ENCODE measurements at regions of chr3 and their contacts with region 1.

Region 1: GRCh38 chr3:136196401-136197158 is 445 bp upstream of the MSL2 start:
- DNase-seq: peak; percentile 99
- ATAC-seq: peak; percentile 80
- H3K4me3 ChIP-seq: peak overlapping the region; percentile 52 to 83
- H3K27ac ChIP-seq: peak overlapping the region; percentile 96
- H3K4me1 ChIP-seq: peaks cover 32 to 44% of the 10 kb centered on the region in 2 experiments
- H3K27me3 ChIP-seq: no peaks in the 10 kb centered on the region
- CTCF ChIP-seq: no peak
- POLR2A ChIP-seq: peak; percentile 56
- RAD21 ChIP-seq: no peak

Region 2: GRCh38 chr3:135944831-135945592 is 251.6 kb before region 1 on chr3:
- CTCF ChIA-PET with region 1: no interaction called
- POLR2A ChIA-PET with region 1: no interaction called
- RAD21 ChIA-PET with region 1: no interaction called
- intact Hi-C with region 1: no loop called
- DNase-seq: no peak
- ATAC-seq: no peak
- H3K4me3 ChIP-seq: no peak overlapping the region
- H3K27ac ChIP-seq: no peak overlapping the region
- H3K4me1 ChIP-seq: no peaks in the 10 kb centered on the region; a peak in 1 of 4 replicates
- H3K27me3 ChIP-seq: no peaks in the 10 kb centered on the region
- CTCF ChIP-seq: no peak
- POLR2A ChIP-seq: no peak
- RAD21 ChIP-seq: no peak

Region 3: GRCh38 chr3:135965506-135966270 is 230.9 kb before region 1 on chr3 and contains the start of gene PPP2R3A:
- CTCF ChIA-PET with region 1: no interaction called
- POLR2A ChIA-PET with region 1: no interaction called
- RAD21 ChIA-PET with region 1: interaction called in 1 of 2 experiments, 3 read pairs
- intact Hi-C with region 1: loop called (anchors 5 kb)
- DNase-seq: peak; percentile 64
- ATAC-seq: peak; percentile 87
- H3K4me3 ChIP-seq: peak within 1 kb of the TSS; percentile 61 to 76
- H3K27ac ChIP-seq: peak within 1 kb of the TSS; percentile 70
- H3K4me1 ChIP-seq: peaks cover 10 to 12% of the 10 kb centered on the region in 2 experiments; a peak in 3 of 4 replicates
- H3K27me3 ChIP-seq: no peaks in the 10 kb centered on the region
- CTCF ChIP-seq: no peak
- POLR2A ChIP-seq: no peak
- RAD21 ChIP-seq: no peak
- total RNA-seq, gene PPP2R3A: 6.1 TPM

Region 4: DNA sequence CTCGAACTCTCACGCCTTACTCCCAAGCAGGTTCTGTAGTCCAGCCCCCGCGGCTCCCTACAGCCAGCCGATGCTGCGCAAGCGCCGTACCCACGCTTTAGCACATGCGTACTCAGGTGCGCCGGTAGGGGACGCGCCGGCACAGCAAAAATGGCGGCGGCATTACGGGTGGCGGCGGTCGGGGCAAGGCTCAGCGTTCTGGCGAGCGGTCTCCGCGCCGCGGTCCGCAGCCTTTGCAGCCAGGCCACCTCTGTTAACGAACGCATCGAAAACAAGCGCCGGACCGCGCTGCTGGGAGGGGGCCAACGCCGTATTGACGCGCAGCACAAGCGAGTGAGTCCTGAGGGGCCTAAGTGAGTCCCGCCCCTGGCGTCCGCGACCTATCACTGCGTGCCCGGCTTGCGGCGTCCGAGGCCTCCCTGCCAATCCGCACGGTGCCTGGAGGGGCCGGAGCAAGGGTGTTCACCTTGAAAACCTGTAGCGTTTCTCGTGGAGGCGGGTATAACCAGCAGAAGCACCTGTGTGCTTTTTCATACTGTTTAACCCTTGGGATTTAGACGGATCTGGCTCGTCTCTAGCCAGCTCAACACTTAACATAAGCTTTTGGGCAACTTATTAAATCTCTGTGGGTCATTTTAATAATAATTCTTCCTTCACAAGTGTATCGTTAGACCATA is 53.8 kb after region 1 on chr3 and contains the start of gene PCCB:
- CTCF ChIA-PET with region 1: no interaction called
- POLR2A ChIA-PET with region 1: interaction called, 6 read pairs
- RAD21 ChIA-PET with region 1: no interaction called
- intact Hi-C with region 1: loop called (anchors 1 kb)
- DNase-seq: peak; percentile 90
- ATAC-seq: peak; percentile 99
- H3K4me3 ChIP-seq: peak within 1 kb of the TSS; percentile 71 to 73
- H3K27ac ChIP-seq: peak within 1 kb of the TSS; percentile 70
- H3K4me1 ChIP-seq: peaks cover 18 to 23% of the 10 kb centered on the region in 2 experiments
- H3K27me3 ChIP-seq: no peaks in the 10 kb centered on the region
- CTCF ChIP-seq: peak in 2 of 3 experiments; percentile 56 to 59; a peak in 4 of 6 replicates
- POLR2A ChIP-seq: peak; percentile 59
- RAD21 ChIP-seq: peak; percentile 46; the same call in 1 of the 2 replicates
- total RNA-seq, gene PCCB: 48.9 TPM